Activated CD8-positive, alpha-beta T cell treated with anti-CD3 and anti-CD28 coated beads for 36 hours (primary cell): ENCODE measurements at regions of chr5 and their contacts with region 1.

Region 1: DNA sequence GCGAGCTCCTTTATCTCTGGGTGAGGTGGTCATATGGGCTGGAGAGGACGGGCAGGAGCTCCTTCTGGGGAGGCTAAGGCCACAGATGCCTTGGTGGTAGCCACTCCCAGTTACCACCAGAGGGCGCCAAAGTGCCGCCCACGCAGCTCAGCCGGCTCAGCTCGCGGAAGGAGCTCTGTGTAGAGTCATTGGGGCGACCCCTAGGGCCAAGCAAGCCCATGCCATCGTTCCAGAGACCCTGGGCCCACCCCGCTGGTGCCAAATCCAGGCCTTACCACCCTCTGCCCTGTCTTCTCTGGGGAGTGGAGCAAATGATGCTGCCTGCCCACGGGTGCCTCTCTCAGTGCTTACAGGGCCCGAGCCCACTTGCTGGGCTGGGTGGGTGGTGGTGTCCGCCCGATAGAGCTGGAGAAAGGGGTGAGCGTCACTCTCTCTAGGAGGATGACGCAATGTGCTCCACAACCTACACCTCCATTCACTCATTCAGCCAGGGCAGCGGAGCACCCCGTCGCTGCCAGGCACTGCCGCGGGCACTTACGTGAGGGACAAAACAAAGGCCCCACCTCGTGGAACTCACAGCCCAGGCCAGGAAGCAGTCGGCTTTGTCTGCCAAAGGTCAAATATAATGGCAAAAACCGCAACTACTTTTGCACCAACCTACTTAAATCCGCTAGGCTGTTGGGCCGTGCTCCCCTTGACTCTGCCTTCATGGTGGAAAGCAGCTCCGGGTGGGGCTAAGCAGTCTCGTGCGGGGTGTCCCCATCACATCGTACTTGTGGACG is 13.8 kb downstream of the TSPAN17 start:
- DNase-seq: peak; percentile 85
- ATAC-seq: peak; percentile 81
- H3K4me3 Mint-ChIP-seq: no peak overlapping the region
- H3K27ac Mint-ChIP-seq: no peak overlapping the region
- H3K4me1 Mint-ChIP-seq: peaks cover 30% of the 10 kb centered on the region
- H3K27me3 Mint-ChIP-seq: peaks cover 7% of the 10 kb centered on the region
- CTCF ChIP-seq: peak; percentile 88

Region 2: DNA sequence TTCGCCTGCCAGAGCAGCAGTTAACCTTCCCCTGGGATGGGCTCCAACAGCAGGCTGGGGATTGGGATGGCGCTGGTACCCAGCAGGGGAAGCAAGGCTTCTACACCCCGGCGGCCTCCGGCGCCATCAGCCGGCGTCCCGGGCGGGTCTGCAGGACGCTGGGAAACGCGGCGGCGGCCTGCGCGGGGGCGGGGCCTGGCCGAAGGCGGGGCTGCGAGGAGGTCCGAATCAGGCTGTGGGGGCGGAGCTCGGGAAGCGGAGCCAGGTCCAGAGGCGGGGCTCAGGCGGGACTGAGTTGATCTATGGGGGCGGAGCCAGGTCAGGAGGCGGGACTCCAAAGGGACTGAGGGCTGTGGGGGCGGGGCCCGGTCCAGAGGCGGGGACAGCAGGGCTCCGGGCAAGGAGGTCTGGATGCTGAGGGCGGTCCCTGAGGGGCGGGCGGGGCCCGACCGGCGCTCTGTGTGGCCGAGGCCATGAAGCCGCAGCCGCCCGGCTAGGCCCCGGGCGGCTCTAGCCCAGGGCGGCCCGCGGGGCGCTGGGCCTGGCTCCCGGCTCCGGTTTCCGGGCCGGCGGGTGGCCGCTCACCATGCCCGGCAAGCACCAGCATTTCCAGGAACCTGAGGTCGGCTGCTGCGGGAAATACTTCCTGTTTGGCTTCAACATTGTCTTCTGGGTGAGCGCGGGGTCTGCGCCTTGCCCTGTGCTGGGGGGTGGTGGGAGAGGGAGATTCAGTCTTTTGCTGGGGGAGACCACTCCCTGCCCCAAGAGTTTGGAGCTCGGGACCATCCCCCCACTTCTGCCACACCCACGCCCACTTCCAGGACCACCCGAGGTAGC is 13.8 kb before region 1 on chr5 and contains the start of gene TSPAN17:
- CTCF ChIA-PET with region 1: interaction called, 54 read pairs
- POLR2A ChIA-PET with region 1: interaction called, 10 read pairs
- intact Hi-C with region 1: no loop called
- DNase-seq: peak; percentile 100
- ATAC-seq: peak; percentile 96
- H3K4me3 Mint-ChIP-seq: peak within 1 kb of the TSS; percentile 83
- H3K27ac Mint-ChIP-seq: peak within 1 kb of the TSS; percentile 88
- H3K4me1 Mint-ChIP-seq: peaks cover 50% of the 10 kb centered on the region
- H3K27me3 Mint-ChIP-seq: no peaks in the 10 kb centered on the region
- CTCF ChIP-seq: no peak
- total RNA-seq, gene TSPAN17: 24.6 to 26.3 TPM

Region 3: DNA sequence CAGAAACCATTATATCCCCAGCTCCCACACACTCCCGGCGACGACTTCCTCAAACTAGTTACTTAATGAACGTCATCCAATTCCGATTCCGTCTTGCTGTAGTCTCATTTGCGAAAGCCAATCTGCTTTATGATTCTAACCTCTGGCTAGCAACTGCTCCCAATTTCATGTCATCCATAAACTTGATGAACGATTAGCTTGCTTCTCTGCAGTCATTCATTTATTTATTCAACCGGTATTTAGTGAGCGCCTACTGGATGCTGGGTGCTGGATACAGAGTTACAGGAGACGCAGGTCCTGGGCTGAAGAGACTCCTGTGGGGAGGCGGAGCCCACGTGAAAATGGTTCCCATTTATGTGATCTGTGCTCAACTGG is 32.4 kb after region 1 on chr5:
- CTCF ChIA-PET with region 1: interaction called, 10 read pairs
- POLR2A ChIA-PET with region 1: interaction called, 3 read pairs
- intact Hi-C with region 1: no loop called
- DNase-seq: no peak
- ATAC-seq: no peak
- H3K4me3 Mint-ChIP-seq: no peak overlapping the region
- H3K27ac Mint-ChIP-seq: no peak overlapping the region
- H3K4me1 Mint-ChIP-seq: no peaks in the 10 kb centered on the region
- H3K27me3 Mint-ChIP-seq: peaks cover 31% of the 10 kb centered on the region
- CTCF ChIP-seq: no peak

Region 4: GRCh38 chr5:176762489-176762888 is 101.4 kb after region 1 on chr5:
- CTCF ChIA-PET with region 1: interaction called, 14 read pairs
- POLR2A ChIA-PET with region 1: no interaction called
- intact Hi-C with region 1: no loop called
- DNase-seq: peak; percentile 16
- ATAC-seq: no peak
- H3K4me3 Mint-ChIP-seq: no peak overlapping the region
- H3K27ac Mint-ChIP-seq: no peak overlapping the region
- H3K4me1 Mint-ChIP-seq: peaks cover 3% of the 10 kb centered on the region
- H3K27me3 Mint-ChIP-seq: peaks cover 18% of the 10 kb centered on the region
- CTCF ChIP-seq: no peak

Region 5: DNA sequence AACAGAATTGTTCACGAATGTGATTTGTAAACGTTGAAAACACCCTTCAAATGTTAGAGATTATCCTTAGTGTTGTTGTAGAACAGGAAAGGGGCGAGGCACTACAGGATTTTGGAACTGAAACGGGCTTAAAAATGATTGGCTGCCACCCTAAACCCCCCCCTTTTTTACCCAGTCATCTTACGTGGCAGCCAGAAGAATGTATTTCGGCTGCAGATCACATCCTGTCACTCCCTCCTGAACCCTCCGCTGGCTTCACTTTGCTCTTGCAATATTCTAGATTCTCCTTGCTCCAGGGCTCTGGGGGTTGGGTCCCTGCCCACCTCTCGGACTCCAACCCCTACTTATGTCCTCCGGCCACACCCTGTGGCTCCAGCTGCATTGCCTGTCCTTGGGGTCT is 135.4 kb after region 1 on chr5:
- CTCF ChIA-PET with region 1: interaction called, 12 read pairs
- POLR2A ChIA-PET with region 1: no interaction called
- intact Hi-C with region 1: no loop called
- DNase-seq: no peak
- ATAC-seq: no peak
- H3K4me3 Mint-ChIP-seq: no peak overlapping the region
- H3K27ac Mint-ChIP-seq: no peak overlapping the region
- H3K4me1 Mint-ChIP-seq: no peaks in the 10 kb centered on the region
- H3K27me3 Mint-ChIP-seq: peaks cover 32% of the 10 kb centered on the region
- CTCF ChIP-seq: no peak

Region 6: GRCh38 chr5:176901260-176902101 is 240.4 kb after region 1 on chr5:
- CTCF ChIA-PET with region 1: interaction called, 13 read pairs
- POLR2A ChIA-PET with region 1: no interaction called
- intact Hi-C with region 1: no loop called
- DNase-seq: peak; percentile 35
- ATAC-seq: peak; percentile 93
- H3K4me3 Mint-ChIP-seq: no peak overlapping the region
- H3K27ac Mint-ChIP-seq: peak overlapping the region; percentile 83
- H3K4me1 Mint-ChIP-seq: peaks cover 25% of the 10 kb centered on the region
- H3K27me3 Mint-ChIP-seq: no peaks in the 10 kb centered on the region
- CTCF ChIP-seq: no peak

Region 7: GRCh38 chr5:176959051-176959450 is 298.0 kb after region 1 on chr5:
- CTCF ChIA-PET with region 1: interaction called, 19 read pairs
- POLR2A ChIA-PET with region 1: no interaction called
- intact Hi-C with region 1: loop called (anchors 5 kb)
- DNase-seq: no peak
- ATAC-seq: peak; percentile 72
- H3K4me3 Mint-ChIP-seq: no peak overlapping the region
- H3K27ac Mint-ChIP-seq: peak overlapping the region; percentile 46
- H3K4me1 Mint-ChIP-seq: no peaks in the 10 kb centered on the region
- H3K27me3 Mint-ChIP-seq: no peaks in the 10 kb centered on the region
- CTCF ChIP-seq: peak; percentile 55

Region 8: GRCh38 chr5:176987583-176987982 is 326.5 kb after region 1 on chr5:
- CTCF ChIA-PET with region 1: no interaction called
- POLR2A ChIA-PET with region 1: no interaction called
- intact Hi-C with region 1: no loop called
- DNase-seq: no peak
- ATAC-seq: no peak
- H3K4me3 Mint-ChIP-seq: no peak overlapping the region
- H3K27ac Mint-ChIP-seq: no peak overlapping the region
- H3K4me1 Mint-ChIP-seq: peaks cover 21% of the 10 kb centered on the region
- H3K27me3 Mint-ChIP-seq: no peaks in the 10 kb centered on the region
- CTCF ChIP-seq: no peak

Region 9: DNA sequence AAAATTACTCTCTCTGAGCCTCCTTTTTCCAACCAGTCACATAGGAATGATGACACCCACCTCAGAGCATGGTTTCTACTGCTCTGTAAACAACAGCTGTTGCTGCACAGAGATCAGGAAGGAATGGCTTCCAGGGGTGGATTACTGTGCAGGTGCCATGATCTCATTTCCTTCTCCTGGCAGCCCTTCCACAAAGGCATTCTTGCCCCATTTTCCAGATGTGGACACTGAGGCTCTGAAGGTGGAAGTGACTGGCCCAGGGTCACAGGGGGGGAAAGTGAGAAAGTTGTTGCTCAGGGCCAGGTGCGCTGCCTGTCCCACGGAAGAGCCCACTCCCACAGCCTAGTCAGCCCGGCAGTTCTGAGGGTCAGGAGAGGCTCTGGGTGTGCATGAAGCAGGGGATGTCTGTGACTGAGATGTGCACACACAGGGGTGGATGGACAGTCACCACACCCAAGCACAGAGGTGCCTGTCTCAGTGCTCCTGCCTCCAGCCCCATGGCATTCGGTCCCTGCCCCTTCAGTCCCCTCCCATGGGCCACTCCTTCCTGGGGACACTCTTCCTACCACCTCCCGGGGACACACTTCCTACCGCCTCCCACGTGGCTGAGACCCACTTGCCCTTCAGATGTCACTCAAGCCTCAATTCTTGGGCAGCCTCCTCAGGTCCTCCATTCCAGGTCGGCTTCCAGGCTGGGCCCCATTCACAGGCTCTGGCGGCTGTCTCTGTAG is 442.6 kb after region 1 on chr5:
- CTCF ChIA-PET with region 1: no interaction called
- POLR2A ChIA-PET with region 1: no interaction called
- intact Hi-C with region 1: no loop called
- DNase-seq: no peak
- ATAC-seq: no peak
- H3K4me3 Mint-ChIP-seq: no peak overlapping the region
- H3K27ac Mint-ChIP-seq: no peak overlapping the region
- H3K4me1 Mint-ChIP-seq: no peaks in the 10 kb centered on the region
- H3K27me3 Mint-ChIP-seq: peaks cover 3% of the 10 kb centered on the region
- CTCF ChIP-seq: no peak